CD4-positive, alpha-beta memory T cell (primary cell): ENCODE measurements at regions of chr2 and their contacts with region 1.

Region 1: GRCh38 chr2:101252408-101253012 is at the start of gene CNOT11:
- DNase-seq: peak; percentile 98 to 99 (median 99)
- H3K4me3 ChIP-seq: peak within 1 kb of the TSS; percentile 88 to 94
- H3K4me3 Mint-ChIP-seq: peak within 1 kb of the TSS; percentile 89 to 99 (median 96)
- H3K27ac ChIP-seq: peak within 1 kb of the TSS; percentile 97
- H3K27ac Mint-ChIP-seq: peak within 1 kb of the TSS; percentile 84 to 99 (median 95)
- H3K4me1 ChIP-seq: peaks cover 37% of the 10 kb centered on the region
- H3K4me1 Mint-ChIP-seq: peaks cover 29 to 57% (median 41%) of the 10 kb centered on the region in 4 donors
- H3K27me3 ChIP-seq: no peaks in the 10 kb centered on the region
- H3K27me3 Mint-ChIP-seq: no peaks in the 10 kb centered on the region
- total RNA-seq, gene CNOT11: 53.8 to 56.9 TPM

Region 2: DNA sequence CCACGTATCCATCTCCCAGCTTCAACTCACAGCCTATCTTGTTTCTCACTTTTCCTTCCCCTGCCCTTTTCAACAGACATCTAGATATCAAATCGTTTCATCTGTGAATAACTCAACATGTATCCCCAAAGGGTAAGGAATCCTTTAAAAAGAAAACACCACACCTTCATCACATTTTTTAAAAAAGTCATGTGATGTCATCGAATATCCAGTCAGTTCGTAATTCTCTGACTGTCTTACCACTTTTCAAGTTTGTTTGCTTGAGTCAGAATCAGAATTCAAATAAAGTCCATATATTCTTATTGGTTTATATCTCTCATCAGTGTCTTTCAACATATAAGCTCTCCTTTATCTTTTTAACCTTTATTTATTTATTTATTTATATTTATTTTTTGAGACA is 924.8 kb before region 1 on chr2:
- CTCF ChIA-PET with region 1: no interaction called
- POLR2A ChIA-PET with region 1: no interaction called
- intact Hi-C with region 1: no loop called
- DNase-seq: no peak
- H3K4me3 ChIP-seq: no peak overlapping the region
- H3K4me3 Mint-ChIP-seq: no peak overlapping the region
- H3K27ac ChIP-seq: no peak overlapping the region
- H3K27ac Mint-ChIP-seq: no peak overlapping the region
- H3K4me1 ChIP-seq: no peaks in the 10 kb centered on the region
- H3K4me1 Mint-ChIP-seq: peaks cover 0 to under 1% (median 0%) of the 10 kb centered on the region in 4 donors
- H3K27me3 ChIP-seq: peaks cover 14% of the 10 kb centered on the region
- H3K27me3 Mint-ChIP-seq: peaks cover 13 to 14% of the 10 kb centered on the region in 2 donors

Region 3: GRCh38 chr2:100562732-100563720 is 689.5 kb before region 1 on chr2 and contains the start of gene PDCL3:
- CTCF ChIA-PET with region 1: no interaction called
- POLR2A ChIA-PET with region 1: interaction called, 6 read pairs
- intact Hi-C with region 1: loop called (anchors 2 kb)
- DNase-seq: peak; percentile 94 to 98 (median 96)
- H3K4me3 ChIP-seq: peak within 1 kb of the TSS; percentile 84 to 89
- H3K4me3 Mint-ChIP-seq: peak within 1 kb of the TSS; percentile 93 to 100 (median 96)
- H3K27ac ChIP-seq: peak within 1 kb of the TSS; percentile 74
- H3K27ac Mint-ChIP-seq: peak within 1 kb of the TSS; percentile 98 to 100 (median 99)
- H3K4me1 ChIP-seq: peaks cover 35% of the 10 kb centered on the region
- H3K4me1 Mint-ChIP-seq: peaks cover 26 to 54% (median 37%) of the 10 kb centered on the region in 4 donors
- H3K27me3 ChIP-seq: no peaks in the 10 kb centered on the region
- H3K27me3 Mint-ChIP-seq: no peaks in the 10 kb centered on the region
- total RNA-seq, gene PDCL3: 16.6 to 17.8 TPM

Region 4: GRCh38 chr2:101151141-101151858 is 101.2 kb before region 1 on chr2 and contains the start of gene TBC1D8:
- CTCF ChIA-PET with region 1: no interaction called
- POLR2A ChIA-PET with region 1: interaction called, 7 read pairs
- intact Hi-C with region 1: loop called (anchors 2 kb)
- DNase-seq: peak; percentile 38 to 65 (median 55)
- H3K4me3 ChIP-seq: peak within 1 kb of the TSS; percentile 28 to 33
- H3K4me3 Mint-ChIP-seq: peak within 1 kb of the TSS; percentile 77 to 92 (median 86)
- H3K27ac ChIP-seq: no peak within 1 kb of the TSS
- H3K27ac Mint-ChIP-seq: peak within 1 kb of the TSS; percentile 19 to 88 (median 71)
- H3K4me1 ChIP-seq: peaks cover 19% of the 10 kb centered on the region
- H3K4me1 Mint-ChIP-seq: peaks cover 18 to 27% (median 22%) of the 10 kb centered on the region in 4 donors
- H3K27me3 ChIP-seq: no peaks in the 10 kb centered on the region
- H3K27me3 Mint-ChIP-seq: peaks cover 2 to 7% of the 10 kb centered on the region in 2 donors
- total RNA-seq, gene TBC1D8: 2.0 to 2.4 TPM

Region 5: DNA sequence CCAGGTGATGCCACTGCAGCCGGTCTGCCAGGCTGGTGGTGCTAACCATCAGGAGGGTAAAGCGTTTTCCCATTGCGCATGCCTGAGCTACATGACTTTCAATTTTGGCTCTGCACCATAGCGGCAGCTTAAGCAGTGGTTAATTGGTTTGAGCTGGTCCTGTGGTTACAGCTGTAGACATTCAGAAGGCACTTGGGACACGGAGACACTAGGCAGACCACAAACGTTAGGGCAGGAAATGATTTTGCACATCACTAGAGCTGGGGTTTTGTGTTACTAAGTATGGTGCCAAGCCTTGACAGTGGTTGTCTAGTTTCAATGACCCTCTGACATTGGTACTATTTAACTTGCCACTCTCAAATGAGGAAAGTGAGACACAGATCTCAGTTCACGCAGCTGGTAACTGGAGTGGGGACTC is 28.7 kb before region 1 on chr2:
- CTCF ChIA-PET with region 1: no interaction called
- POLR2A ChIA-PET with region 1: interaction called, 14 read pairs
- intact Hi-C with region 1: no loop called
- DNase-seq: peak; percentile 60 to 72 (median 66)
- H3K4me3 ChIP-seq: no peak overlapping the region
- H3K4me3 Mint-ChIP-seq: peak overlapping the region; percentile 42 to 78 (median 58)
- H3K27ac ChIP-seq: no peak overlapping the region
- H3K27ac Mint-ChIP-seq: peak overlapping the region; percentile 43 to 91 (median 67)
- H3K4me1 ChIP-seq: peaks cover 14% of the 10 kb centered on the region
- H3K4me1 Mint-ChIP-seq: peaks cover 13 to 16% (median 13%) of the 10 kb centered on the region in 4 donors
- H3K27me3 ChIP-seq: no peaks in the 10 kb centered on the region
- H3K27me3 Mint-ChIP-seq: no peaks in the 10 kb centered on the region

Region 6: GRCh38 chr2:101302013-101302412 is 49.5 kb after region 1 on chr2:
- CTCF ChIA-PET with region 1: interaction called, 5 read pairs
- POLR2A ChIA-PET with region 1: interaction called, 21 read pairs
- intact Hi-C with region 1: loop called (anchors 1 kb)
- DNase-seq: no peak
- H3K4me3 ChIP-seq: no peak overlapping the region
- H3K4me3 Mint-ChIP-seq: peak overlapping the region in 7 of 8 donors; percentile 9 to 67 (median 46)
- H3K27ac ChIP-seq: peak overlapping the region; percentile 6
- H3K27ac Mint-ChIP-seq: peak overlapping the region in 5 of 7 donors; percentile 37 to 96 (median 47)
- H3K4me1 ChIP-seq: peaks cover 92% of the 10 kb centered on the region
- H3K4me1 Mint-ChIP-seq: peaks cover 66 to 98% (median 80%) of the 10 kb centered on the region in 4 donors
- H3K27me3 ChIP-seq: no peaks in the 10 kb centered on the region
- H3K27me3 Mint-ChIP-seq: no peaks in the 10 kb centered on the region

Region 7: DNA sequence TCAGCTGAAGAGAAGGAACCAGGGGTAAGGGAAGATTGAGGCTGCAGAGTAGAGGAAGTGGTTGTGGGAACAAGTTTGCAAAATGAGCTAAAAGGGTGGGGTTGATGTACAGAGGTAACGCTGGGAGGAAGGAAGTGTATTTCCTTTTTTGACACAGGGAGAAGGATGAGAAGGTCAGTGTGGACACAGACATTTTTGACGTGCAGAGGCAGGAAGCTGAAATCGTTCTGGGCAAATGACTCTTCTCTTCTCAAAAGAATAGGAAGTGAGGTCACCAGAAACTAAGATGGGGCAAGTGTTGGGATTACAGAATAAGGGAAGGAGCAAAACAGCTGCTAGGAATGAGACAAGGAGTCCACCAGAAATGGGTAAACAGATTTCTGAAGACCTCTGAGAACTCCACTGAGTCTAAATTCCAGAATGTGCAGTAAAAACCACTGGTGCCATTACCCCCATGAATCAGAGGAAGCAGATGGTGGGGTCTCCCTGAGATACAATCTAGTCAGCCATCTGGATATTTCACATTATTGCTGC is 76.0 kb after region 1 on chr2:
- CTCF ChIA-PET with region 1: no interaction called
- POLR2A ChIA-PET with region 1: interaction called, 50 read pairs
- intact Hi-C with region 1: loop called (anchors 1 kb)
- DNase-seq: peak; percentile 65 to 81 (median 80)
- H3K4me3 ChIP-seq: peak overlapping the region; percentile 2 to 39
- H3K4me3 Mint-ChIP-seq: no peak overlapping the region
- H3K27ac ChIP-seq: peak overlapping the region; percentile 52
- H3K27ac Mint-ChIP-seq: no peak overlapping the region
- H3K4me1 ChIP-seq: peaks cover 70% of the 10 kb centered on the region
- H3K4me1 Mint-ChIP-seq: peaks cover 5 to 33% (median 6%) of the 10 kb centered on the region in 4 donors
- H3K27me3 ChIP-seq: no peaks in the 10 kb centered on the region
- H3K27me3 Mint-ChIP-seq: no peaks in the 10 kb centered on the region